ENCODE measurements at regions of chr4 and their contacts with region 1.

Region 1: GRCh38 chr4:124940387-124940786 is 227.9 kb upstream of the ANKRD50 start:
- DNase-seq: peak; percentile 90
- H3K4me3 Mint-ChIP-seq: no peak overlapping the region
- H3K27ac Mint-ChIP-seq: peak overlapping the region; percentile 90
- H3K4me1 Mint-ChIP-seq: peaks cover 50% of the 10 kb centered on the region
- H3K27me3 Mint-ChIP-seq: no peaks in the 10 kb centered on the region
- CTCF ChIP-seq: no peak

Region 2: GRCh38 chr4:124334119-124334518 is 606.3 kb before region 1 on chr4:
- CTCF ChIA-PET with region 1: no interaction called
- POLR2A ChIA-PET with region 1: no interaction called
- intact Hi-C with region 1: loop called (anchors 10 kb)
- DNase-seq: peak; percentile 81
- H3K4me3 Mint-ChIP-seq: peak overlapping the region; percentile 23
- H3K27ac Mint-ChIP-seq: no peak overlapping the region
- H3K4me1 Mint-ChIP-seq: peaks cover 5% of the 10 kb centered on the region
- H3K27me3 Mint-ChIP-seq: no peaks in the 10 kb centered on the region
- CTCF ChIP-seq: peak; percentile 64

Region 3: DNA sequence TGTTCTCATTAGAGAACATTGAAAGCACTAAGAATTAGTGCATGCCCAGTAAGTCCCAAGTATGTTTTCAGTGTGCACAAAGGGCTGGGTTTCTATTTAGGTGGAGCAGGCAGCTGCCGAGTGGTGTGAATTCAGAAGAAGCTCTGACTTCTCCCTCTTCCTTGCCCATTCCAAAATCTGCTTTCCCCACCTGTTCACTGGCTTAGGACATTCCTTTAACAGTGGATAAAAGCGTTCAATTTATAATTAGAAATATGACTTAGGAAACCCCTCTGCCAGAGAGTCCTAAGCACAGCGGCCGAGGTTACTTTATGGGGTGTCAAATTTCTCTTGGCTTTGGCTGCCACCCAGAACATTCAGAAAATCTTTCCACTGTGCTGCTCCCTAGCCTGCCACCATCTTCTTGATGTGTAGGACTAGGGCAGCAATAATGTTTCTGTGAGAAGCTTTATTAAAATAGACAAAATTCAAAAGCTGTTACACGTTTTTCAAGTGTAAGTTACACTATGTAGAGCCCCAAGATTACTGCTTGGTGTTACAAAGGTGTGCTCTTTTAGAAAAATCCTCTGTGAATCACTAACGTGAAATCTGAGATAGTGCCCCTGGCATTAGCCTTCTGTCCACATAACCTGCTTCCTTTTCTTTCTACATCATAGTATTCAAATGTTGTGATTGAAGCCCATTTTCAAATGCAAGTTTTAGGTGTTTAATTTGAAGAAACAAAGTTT is 36.2 kb before region 1 on chr4:
- CTCF ChIA-PET with region 1: no interaction called
- POLR2A ChIA-PET with region 1: interaction called, 15 read pairs
- intact Hi-C with region 1: no loop called
- DNase-seq: peak; percentile 84
- H3K4me3 Mint-ChIP-seq: peak overlapping the region; percentile 62
- H3K27ac Mint-ChIP-seq: peak overlapping the region; percentile 92
- H3K4me1 Mint-ChIP-seq: peaks cover 18% of the 10 kb centered on the region
- H3K27me3 Mint-ChIP-seq: no peaks in the 10 kb centered on the region
- CTCF ChIP-seq: no peak

Region 4: GRCh38 chr4:124918559-124919122 is 21.7 kb before region 1 on chr4:
- CTCF ChIA-PET with region 1: interaction called, 3 read pairs
- POLR2A ChIA-PET with region 1: no interaction called
- intact Hi-C with region 1: loop called (anchors 1 kb)
- DNase-seq: no peak
- H3K4me3 Mint-ChIP-seq: no peak overlapping the region
- H3K27ac Mint-ChIP-seq: no peak overlapping the region
- H3K4me1 Mint-ChIP-seq: no peaks in the 10 kb centered on the region
- H3K27me3 Mint-ChIP-seq: no peaks in the 10 kb centered on the region
- CTCF ChIP-seq: no peak

Region 5: GRCh38 chr4:125104616-125105015 is 164.2 kb after region 1 on chr4:
- CTCF ChIA-PET with region 1: no interaction called
- POLR2A ChIA-PET with region 1: interaction called, 7 read pairs
- intact Hi-C with region 1: loop called (anchors 2 kb)
- DNase-seq: peak; percentile 36
- H3K4me3 Mint-ChIP-seq: no peak overlapping the region
- H3K27ac Mint-ChIP-seq: no peak overlapping the region
- H3K4me1 Mint-ChIP-seq: peaks cover 32% of the 10 kb centered on the region
- H3K27me3 Mint-ChIP-seq: no peaks in the 10 kb centered on the region
- CTCF ChIP-seq: no peak

Region 6: DNA sequence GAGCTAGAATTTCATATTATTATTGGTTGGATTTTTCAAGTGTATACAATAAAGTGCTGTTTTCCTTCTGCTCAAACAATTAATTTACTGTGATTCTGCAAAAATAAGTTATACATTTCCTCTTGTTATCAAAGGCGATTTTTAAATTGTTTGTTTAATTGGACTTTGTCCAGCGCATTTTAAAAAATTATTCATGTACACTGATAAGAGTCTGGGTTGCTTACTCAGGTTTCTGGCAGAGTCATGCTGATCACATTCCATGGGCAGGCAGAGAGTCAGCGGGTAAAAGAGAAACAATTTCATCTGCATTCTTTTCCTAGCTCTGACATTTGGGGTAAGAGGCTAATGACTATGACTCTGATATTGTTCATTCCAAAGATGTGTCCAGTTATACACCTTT is 383.3 kb after region 1 on chr4:
- CTCF ChIA-PET with region 1: no interaction called
- POLR2A ChIA-PET with region 1: no interaction called
- intact Hi-C with region 1: no loop called
- DNase-seq: peak; percentile 55
- H3K4me3 Mint-ChIP-seq: peak overlapping the region; percentile 49
- H3K27ac Mint-ChIP-seq: peak overlapping the region; percentile 72
- H3K4me1 Mint-ChIP-seq: peaks cover 41% of the 10 kb centered on the region
- H3K27me3 Mint-ChIP-seq: no peaks in the 10 kb centered on the region
- CTCF ChIP-seq: no peak